Activated CD4-positive, alpha-beta T cell treated with anti-CD3 and anti-CD28 coated beads, Interleukin-2, amount 10 ng/mL, durations not matched to agents 24 days and 14 days (primary cell): ENCODE measurements at regions of chr9 and their contacts with region 1.

Region 1: DNA sequence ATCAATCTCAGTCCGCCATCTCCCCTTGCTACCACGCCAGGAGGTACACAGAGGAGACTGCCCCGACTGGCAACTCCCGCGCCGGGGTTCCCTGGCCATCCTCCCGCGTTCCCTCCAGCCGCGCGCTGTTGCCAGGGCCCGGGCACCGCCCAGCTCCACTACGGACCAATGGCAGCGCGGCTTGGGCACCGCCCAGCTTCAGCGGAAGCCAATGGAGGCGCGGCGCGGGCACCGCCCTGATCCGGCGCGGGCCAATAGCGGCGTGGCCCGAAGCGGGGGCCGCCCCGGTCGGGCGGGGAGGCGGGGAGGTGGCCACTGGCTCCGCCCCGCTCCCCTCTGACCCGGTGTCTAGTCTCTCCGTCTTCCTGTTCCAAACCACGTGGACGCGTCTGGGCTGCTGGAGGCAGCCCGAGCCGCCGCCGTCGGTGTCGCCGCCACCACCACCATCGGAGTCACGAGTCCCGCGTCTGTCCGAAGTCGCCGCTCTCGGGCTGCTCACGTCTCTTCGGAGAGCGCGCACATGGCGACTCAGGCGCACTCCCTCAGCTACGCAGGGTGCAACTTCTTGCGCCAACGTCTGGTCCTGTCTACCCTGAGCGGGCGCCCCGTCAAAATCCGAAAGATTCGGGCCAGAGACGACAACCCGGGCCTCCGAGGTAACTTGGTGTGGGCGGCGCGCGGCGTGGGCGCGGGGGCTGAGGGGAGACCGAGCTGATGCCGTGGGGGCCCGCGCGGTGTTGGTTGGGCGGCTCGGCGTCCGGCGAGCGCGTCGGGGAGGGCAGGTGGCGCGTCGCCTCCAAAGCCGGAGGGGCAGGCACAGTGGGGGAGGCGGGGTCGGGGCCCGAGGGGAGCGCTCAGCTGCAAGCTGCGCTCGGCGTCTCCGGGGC is at the start of gene RCL1:
- DNase-seq: peak; percentile 100
- H3K4me3 Mint-ChIP-seq: peak within 1 kb of the TSS; percentile 82
- H3K27ac Mint-ChIP-seq: peak within 1 kb of the TSS; percentile 95
- H3K4me1 Mint-ChIP-seq: peaks cover 51% of the 10 kb centered on the region
- H3K27me3 Mint-ChIP-seq: peaks cover 9% of the 10 kb centered on the region
- total RNA-seq, gene RCL1: 44.1 and 44.6 TPM in 2 replicates

Region 2: GRCh38 chr9:4679268-4680172 is 113.3 kb before region 1 on chr9 and contains the start of gene CDC37L1:
- intact Hi-C with region 1: loop called (anchors 5 kb)
- DNase-seq: peak; percentile 100
- H3K4me3 Mint-ChIP-seq: no peak within 1 kb of the TSS
- H3K27ac Mint-ChIP-seq: no peak within 1 kb of the TSS
- H3K4me1 Mint-ChIP-seq: peaks cover 7% of the 10 kb centered on the region
- H3K27me3 Mint-ChIP-seq: no peaks in the 10 kb centered on the region
- total RNA-seq, gene CDC37L1: 11.3 and 12.1 TPM in 2 replicates

Region 3: GRCh38 chr9:4762108-4762885 is 30.5 kb before region 1 on chr9:
- intact Hi-C with region 1: loop called (anchors 2 kb)
- DNase-seq: peak; percentile 94
- H3K4me3 Mint-ChIP-seq: peak overlapping the region; percentile 63
- H3K27ac Mint-ChIP-seq: peak overlapping the region; percentile 22
- H3K4me1 Mint-ChIP-seq: peaks cover 16% of the 10 kb centered on the region
- H3K27me3 Mint-ChIP-seq: peaks cover 6% of the 10 kb centered on the region

Region 4: DNA sequence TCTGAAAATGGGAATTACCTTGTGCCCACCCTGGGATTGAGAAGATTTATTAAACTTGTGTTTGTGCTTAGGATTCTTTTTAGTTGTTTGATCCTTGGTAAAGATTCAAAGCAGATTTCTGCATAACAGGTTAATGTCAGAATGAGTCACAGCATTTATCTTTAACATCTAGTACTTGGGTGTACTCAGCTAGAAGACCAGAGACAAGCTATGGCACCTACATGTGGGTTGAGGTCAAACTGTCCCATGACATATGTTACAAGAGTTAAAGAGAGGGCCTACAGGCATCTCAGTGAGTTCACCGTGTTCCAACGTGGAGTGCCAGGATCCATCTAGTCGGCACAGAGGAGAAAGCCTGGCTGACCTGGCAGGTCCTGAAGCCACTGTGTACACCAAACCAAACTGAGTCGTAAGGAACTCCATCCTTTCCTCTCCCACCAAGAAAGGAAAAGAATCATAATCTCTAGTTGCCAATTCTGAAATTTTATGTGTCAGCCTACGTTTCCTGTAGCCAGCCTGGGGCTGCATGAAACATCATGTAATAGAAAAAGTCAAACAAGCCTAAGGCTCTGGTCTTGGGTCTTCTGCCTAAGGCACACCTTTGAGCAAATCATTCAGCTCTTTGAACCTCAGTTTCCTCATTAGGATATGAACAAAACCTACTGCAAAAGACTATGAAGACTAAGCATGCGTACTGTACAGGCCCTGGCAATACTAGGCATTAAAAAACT is 73.6 kb after region 1 on chr9:
- intact Hi-C with region 1: loop called (anchors 2 kb)
- DNase-seq: peak; percentile 67
- H3K4me3 Mint-ChIP-seq: peak overlapping the region; percentile 35
- H3K27ac Mint-ChIP-seq: peak overlapping the region; percentile 81
- H3K4me1 Mint-ChIP-seq: peaks cover 32% of the 10 kb centered on the region
- H3K27me3 Mint-ChIP-seq: no peaks in the 10 kb centered on the region

Region 5: DNA sequence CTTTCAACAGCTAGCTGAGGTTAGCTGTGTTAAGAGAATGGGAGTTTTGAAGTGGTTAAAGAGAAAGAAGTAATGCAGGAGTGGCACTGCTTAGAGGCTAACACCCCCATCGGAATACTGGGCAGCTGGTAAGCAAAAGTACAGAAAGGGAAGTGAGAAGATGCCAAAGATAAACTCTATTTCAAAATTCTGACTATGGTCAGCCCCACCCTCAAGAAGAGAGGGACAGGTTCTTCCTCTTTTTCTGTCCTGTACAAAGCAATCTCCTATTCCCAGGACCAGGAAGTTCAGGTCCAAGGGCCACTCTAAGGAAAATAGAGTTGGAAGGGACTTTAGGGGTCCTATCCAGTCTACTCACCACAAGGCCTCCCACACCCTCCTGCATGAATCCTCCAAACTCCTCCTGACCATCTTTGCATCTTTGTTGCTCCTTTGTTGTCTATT is 146.3 kb after region 1 on chr9:
- intact Hi-C with region 1: loop called (anchors 2 kb)
- DNase-seq: peak; percentile 83
- H3K4me3 Mint-ChIP-seq: peak overlapping the region; percentile 40
- H3K27ac Mint-ChIP-seq: peak overlapping the region; percentile 92
- H3K4me1 Mint-ChIP-seq: peaks cover 67% of the 10 kb centered on the region
- H3K27me3 Mint-ChIP-seq: no peaks in the 10 kb centered on the region

Region 6: DNA sequence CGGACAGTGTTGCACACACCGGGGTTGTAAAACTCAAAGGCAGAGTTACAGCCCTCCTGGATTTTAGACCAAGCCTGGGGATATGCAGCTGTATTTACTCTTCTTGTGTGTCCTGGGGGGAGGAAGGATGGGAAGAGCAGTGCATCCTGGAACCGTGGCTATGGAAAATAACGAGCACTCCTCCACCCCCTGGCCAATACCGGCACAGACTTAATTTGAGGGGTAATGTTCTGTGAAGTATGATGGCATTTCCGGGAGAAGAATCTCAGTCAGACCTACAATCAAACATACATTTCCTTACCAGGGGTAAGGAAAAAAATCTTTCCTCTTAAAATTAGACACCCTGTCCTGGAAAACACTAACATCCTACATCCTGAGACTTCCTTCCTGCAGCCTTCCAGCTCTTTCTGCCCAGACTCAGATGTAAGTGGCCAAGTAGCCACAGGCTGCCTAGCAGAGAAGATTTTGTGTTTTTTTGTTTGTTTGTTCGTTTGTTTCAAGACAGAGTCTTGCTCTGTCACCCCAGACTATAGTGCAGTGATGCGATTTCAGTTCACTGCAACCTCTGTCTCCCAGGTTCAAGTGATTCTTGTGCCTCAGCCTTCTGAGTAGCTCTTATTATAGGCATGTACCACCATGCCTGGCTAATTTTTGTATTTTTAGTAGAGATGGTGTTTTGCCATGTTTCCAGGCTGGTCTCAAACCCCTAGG is 1051.1 kb after region 1 on chr9:
- intact Hi-C with region 1: loop called (anchors 5 kb)
- DNase-seq: peak; percentile 63
- H3K4me3 Mint-ChIP-seq: peak overlapping the region; percentile 73
- H3K27ac Mint-ChIP-seq: peak overlapping the region; percentile 91
- H3K4me1 Mint-ChIP-seq: peaks cover 68% of the 10 kb centered on the region
- H3K27me3 Mint-ChIP-seq: no peaks in the 10 kb centered on the region